ENCODE measurements at regions of chr14 and their contacts with region 1.

Region 1: GRCh38 chr14:94689218-94689984 is 77.2 kb downstream of the SERPINA3 start:
- DNase-seq: peak; percentile 23
- H3K4me3 ChIP-seq: no peak overlapping the region
- H3K27ac ChIP-seq: no peak overlapping the region
- H3K4me1 ChIP-seq: peaks cover 4% of the 10 kb centered on the region
- H3K27me3 ChIP-seq: no peaks in the 10 kb centered on the region
- CTCF ChIP-seq: peak; percentile 80 to 99

Region 2: DNA sequence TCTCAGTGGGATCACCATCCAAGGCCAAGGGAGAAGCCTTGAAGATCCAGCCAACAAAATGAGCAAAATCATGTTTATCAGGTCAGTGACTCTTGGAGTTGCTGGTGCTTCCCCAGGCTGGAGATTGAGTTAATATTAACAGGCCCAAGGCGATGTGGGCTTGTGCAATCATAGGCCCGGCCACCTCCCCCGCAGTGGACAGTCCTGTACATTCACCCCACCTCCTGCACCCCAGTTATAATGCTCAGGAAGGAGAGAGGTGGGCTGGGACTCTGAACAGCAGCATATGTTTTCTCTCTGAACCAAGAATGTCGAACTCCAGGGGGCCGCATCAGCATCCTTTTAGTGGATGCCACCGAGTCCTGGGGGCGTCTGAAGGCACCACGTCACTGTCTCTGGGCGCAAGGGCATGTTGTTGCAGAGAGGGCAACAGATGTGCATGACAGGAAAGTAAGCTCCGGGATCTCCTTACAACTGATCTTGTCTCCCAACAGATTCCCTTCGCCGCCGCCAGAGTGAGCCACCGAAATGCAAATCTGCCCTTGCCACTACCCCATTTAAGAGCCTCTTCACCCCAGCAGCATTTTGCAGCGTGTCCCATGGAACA is 334.1 kb before region 1 on chr14:
- CTCF ChIA-PET with region 1: no interaction called
- dilution Hi-C with region 1: no loop called
- in situ Hi-C with region 1: no loop called
- intact Hi-C with region 1: loop called (anchors 10 kb)
- DNase-seq: peak; percentile 66
- H3K4me3 ChIP-seq: no peak overlapping the region
- H3K27ac ChIP-seq: no peak overlapping the region
- H3K4me1 ChIP-seq: peaks cover 12% of the 10 kb centered on the region
- H3K27me3 ChIP-seq: no peaks in the 10 kb centered on the region
- CTCF ChIP-seq: peak; percentile 47 to 79

Region 3: DNA sequence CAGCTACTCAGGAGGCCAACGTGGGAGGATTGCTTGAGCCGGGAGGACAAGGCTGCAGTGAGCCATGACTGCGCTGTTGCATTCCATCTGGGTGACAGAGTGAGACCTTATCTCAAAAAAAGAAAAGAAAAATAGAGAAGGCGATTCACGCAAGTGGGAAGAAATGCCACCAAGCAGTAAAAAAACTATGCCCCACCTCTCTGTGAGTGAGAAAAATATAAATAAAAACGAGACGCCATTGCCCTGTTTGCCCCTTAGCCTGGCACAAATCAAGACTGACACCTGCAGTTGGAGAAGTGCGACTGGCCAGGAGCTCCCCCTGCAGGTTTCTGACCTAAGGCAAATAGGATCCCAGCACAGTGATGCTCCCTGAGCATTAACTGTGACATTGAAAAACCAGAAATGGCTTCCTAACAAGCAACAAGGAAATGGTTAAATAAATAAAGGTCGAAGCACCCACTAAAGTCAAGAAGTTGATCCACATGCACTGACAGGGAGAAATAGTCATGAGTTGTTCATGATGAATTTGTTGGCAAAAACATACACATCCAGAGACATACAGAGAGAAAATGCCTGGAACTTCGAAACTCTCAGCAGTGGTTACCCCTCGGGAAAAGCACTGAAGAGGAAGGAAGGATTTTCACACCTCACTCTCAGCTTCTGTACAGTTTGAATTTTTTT is 59.4 kb after region 1 on chr14:
- CTCF ChIA-PET with region 1: no interaction called
- dilution Hi-C with region 1: no loop called
- in situ Hi-C with region 1: no loop called
- intact Hi-C with region 1: loop called (anchors 1 kb)
- DNase-seq: no peak
- H3K4me3 ChIP-seq: no peak overlapping the region
- H3K27ac ChIP-seq: no peak overlapping the region
- H3K4me1 ChIP-seq: no peaks in the 10 kb centered on the region
- H3K27me3 ChIP-seq: no peaks in the 10 kb centered on the region
- CTCF ChIP-seq: peak; percentile 35 to 78

Region 4: DNA sequence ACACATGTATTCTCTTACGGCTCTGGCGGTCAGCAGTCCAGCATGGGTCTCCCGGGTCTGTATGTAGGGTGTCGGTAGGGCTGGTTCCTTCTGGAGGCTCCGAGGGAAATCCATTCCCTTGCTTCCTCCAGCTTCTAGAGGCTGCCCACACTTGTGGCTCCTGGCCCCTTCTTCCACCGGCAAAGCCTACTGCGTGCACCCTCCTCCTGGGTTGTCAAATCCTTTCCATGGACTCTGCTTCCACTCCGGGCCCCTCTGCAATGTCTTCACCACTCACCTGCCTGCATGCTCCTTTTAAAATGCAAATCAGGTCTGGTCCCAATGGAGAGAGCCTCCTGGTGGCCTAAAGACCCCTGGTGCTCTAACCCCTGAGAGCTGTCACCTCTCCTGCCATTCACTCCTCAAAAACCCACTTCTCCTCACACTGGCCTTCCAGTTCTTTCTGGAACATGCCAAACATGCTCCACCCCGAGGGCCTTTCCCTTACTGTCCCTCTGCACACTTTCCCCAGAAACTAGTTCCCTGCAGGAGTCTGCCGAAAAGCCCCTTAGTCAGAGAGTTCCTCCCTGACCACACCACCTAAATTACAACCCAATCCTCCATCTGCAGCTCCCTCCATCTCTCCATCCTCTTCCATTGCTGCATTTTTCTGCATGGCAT is 359.5 kb after region 1 on chr14:
- CTCF ChIA-PET with region 1: interaction called, 10 read pairs
- dilution Hi-C with region 1: no loop called
- in situ Hi-C with region 1: no loop called
- intact Hi-C with region 1: no loop called
- DNase-seq: no peak
- H3K4me3 ChIP-seq: no peak overlapping the region
- H3K27ac ChIP-seq: no peak overlapping the region
- H3K4me1 ChIP-seq: no peaks in the 10 kb centered on the region
- H3K27me3 ChIP-seq: no peaks in the 10 kb centered on the region
- CTCF ChIP-seq: no peak

Region 5: DNA sequence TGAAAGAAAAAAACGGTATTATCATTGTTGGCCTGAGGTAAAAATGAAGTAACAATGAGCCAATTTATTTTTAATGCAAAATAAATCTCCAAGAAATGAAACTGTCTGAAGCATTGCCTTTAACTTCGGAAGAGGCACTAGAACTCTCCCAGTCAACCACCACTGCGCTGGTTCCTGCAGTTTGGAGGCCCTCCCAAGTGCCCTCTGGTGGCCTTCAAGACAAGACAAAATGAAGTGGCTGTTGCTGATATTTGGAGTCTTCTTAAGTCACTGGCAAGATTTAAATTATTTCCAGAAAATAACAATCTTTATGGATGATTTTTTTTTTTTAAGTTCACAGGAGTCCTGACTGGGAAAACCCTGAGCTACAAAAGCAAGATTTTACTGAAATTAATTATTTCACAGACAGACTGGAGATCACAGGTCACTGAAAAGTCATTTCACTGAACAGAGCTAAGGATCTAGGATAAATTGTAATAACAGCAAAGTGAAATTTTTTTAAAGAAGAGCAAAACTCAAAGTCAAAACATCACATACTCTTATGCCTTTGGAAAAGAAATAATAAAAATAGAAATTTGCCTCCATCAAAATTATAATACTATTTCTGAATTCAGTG is 409.7 kb after region 1 on chr14:
- CTCF ChIA-PET with region 1: no interaction called
- dilution Hi-C with region 1: no loop called
- in situ Hi-C with region 1: loop called (anchors 10 to 25 kb)
- intact Hi-C with region 1: loop called (anchors 1 kb)
- DNase-seq: peak; percentile 49
- H3K4me3 ChIP-seq: no peak overlapping the region
- H3K27ac ChIP-seq: no peak overlapping the region
- H3K4me1 ChIP-seq: no peaks in the 10 kb centered on the region
- H3K27me3 ChIP-seq: no peaks in the 10 kb centered on the region
- CTCF ChIP-seq: peak; percentile 70 to 89

Region 6: GRCh38 chr14:95431199-95432143 is 742.1 kb after region 1 on chr14:
- CTCF ChIA-PET with region 1: no interaction called
- dilution Hi-C with region 1: no loop called
- in situ Hi-C with region 1: loop called in 1 of 2 experiments (anchors 25 kb)
- intact Hi-C with region 1: loop called (anchors 1 kb)
- DNase-seq: no peak
- H3K4me3 ChIP-seq: no peak overlapping the region
- H3K27ac ChIP-seq: no peak overlapping the region
- H3K4me1 ChIP-seq: no peaks in the 10 kb centered on the region
- H3K27me3 ChIP-seq: no peaks in the 10 kb centered on the region
- CTCF ChIP-seq: peak; percentile 61

Region 7: DNA sequence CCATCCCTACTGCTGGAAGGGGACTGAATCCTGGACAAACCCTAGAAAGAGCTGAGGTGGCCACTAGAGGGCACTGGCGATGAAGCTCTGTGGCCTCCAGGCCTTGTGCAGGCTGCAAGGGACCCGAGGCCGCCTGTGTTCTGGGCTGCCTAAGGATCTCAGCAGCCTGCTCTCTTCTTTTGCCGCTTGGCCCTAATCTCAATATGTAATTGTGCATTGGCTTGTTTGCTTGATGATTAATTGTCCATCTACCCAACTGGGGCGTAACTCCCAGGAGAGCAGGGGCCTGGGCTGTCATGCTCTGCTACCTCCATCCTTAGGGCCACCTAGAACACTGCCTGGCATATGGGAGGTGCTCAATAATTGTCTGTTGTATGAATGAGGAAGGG is 753.2 kb after region 1 on chr14:
- CTCF ChIA-PET with region 1: no interaction called
- dilution Hi-C with region 1: no loop called
- in situ Hi-C with region 1: loop called in 1 of 2 experiments (anchors 25 kb)
- intact Hi-C with region 1: no loop called
- DNase-seq: peak; percentile 56
- H3K4me3 ChIP-seq: no peak overlapping the region
- H3K27ac ChIP-seq: no peak overlapping the region
- H3K4me1 ChIP-seq: no peaks in the 10 kb centered on the region
- H3K27me3 ChIP-seq: no peaks in the 10 kb centered on the region
- CTCF ChIP-seq: peak; percentile 93 to 95

Region 8: DNA sequence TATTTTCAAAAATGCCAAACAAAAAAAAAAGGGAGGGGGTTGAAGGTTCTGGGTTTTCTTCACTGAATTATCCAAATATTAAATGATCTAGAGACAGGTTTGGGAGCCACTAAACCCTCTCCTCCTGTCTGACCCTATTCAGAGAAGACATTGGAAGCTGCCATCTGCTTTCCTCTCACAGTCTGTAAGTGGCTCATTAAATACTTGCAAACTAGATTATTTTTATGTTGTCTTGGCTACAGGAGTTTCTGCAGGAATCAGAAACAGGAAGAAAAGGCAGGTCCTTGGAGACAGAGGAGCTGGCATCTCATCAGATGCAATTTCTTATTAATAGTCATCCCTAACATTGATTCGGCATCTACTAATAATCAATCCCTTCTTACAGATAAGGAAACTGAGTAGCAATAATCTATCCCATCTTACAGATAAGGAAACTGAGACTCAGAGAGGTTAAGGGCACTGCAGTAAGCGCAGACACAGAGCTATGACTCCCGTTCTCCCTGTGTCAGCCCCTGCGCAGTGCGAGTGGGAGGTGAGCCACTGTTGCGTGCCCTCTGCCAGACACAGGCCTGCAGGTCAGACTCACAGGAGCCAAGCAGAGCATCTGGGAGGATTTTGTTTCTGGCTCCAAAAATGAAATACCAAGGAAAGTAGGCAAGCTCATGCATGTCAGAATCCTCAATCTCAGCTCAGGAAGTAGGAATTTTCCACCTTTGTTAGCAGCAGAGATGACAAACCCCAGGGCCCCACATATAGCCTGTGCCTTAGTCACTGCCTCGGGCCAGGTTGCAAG is 1526.2 kb after region 1 on chr14:
- CTCF ChIA-PET with region 1: no interaction called
- dilution Hi-C with region 1: no loop called
- in situ Hi-C with region 1: no loop called
- intact Hi-C with region 1: no loop called
- DNase-seq: peak; percentile 75
- H3K4me3 ChIP-seq: no peak overlapping the region
- H3K27ac ChIP-seq: peak overlapping the region; percentile 23
- H3K4me1 ChIP-seq: peaks cover 18% of the 10 kb centered on the region
- H3K27me3 ChIP-seq: no peaks in the 10 kb centered on the region
- CTCF ChIP-seq: no peak